Uterus (tissue), 4 donors: ENCODE measurements at regions of chr1 and their contacts with region 1.

Region 1: GRCh38 chr1:19643602-19644394 is at the start of gene NBL1:
- DNase-seq: peak; percentile 78 to 83
- H3K4me3 ChIP-seq: peak within 1 kb of the TSS; percentile 71 to 89
- H3K27ac ChIP-seq: peak within 1 kb of the TSS; percentile 96 to 97
- H3K4me1 ChIP-seq: peaks cover 0 to 19% of the 10 kb centered on the region in 2 donors
- H3K27me3 ChIP-seq: no peaks in the 10 kb centered on the region
- CTCF ChIP-seq: peak in 3 of 4 experiments; percentile 2 to 38 (median 7)
- POLR2A ChIP-seq: peak; percentile 49 to 75
- total RNA-seq, gene NBL1: 54.1 to 222 (median 71.1) TPM

Region 2: GRCh38 chr1:19462781-19463503 is 180.9 kb before region 1 on chr1:
- intact Hi-C with region 1: no loop called
- DNase-seq: no peak
- H3K4me3 ChIP-seq: no peak overlapping the region
- H3K27ac ChIP-seq: peak overlapping the region; percentile 10 to 27
- H3K4me1 ChIP-seq: no peaks in the 10 kb centered on the region
- H3K27me3 ChIP-seq: no peaks in the 10 kb centered on the region
- CTCF ChIP-seq: no peak
- POLR2A ChIP-seq: no peak

Region 3: DNA sequence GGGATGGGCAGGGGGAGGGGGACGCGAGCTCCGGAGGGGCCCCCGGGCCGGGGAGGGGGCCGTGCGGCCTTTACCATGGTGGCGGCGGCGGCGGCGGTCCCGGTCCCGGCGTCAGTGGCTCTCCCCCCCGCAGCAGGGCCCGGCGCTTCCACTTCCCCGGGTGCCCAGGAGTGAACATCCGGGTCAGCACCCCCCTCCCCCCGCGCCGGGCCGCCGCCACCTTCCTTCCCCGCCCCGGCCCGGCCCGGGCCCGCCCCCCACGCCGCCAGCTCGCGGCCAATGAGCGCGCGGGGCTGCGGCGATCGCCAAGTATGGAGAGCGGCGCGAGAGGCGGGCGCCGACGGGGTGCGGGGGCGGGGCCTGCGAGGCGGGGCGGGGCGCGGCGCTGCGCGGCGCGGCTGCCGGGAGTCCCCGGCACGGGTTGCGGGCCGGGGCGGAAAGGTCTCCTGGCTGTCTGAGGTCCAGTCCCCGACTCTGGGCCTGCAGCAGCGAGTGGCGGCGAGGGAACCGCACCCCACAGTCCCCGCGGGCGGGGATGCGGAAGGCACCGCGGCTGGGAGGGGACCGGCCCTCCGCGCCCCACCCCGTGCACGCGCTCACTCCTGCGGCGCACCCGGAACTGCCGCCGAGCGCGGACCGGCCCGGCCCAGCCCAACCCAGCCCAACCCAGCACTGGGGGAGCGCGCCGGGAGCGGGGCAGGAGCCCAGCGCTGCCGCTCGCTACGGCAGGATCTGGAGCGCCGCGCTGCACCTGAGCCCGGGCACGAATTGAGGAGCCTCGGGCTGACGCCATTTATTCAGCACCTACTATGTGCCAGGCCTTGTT is 158.2 kb before region 1 on chr1 and contains the start of gene CAPZB:
- intact Hi-C with region 1: loop called (anchors 10 kb)
- DNase-seq: peak; percentile 94 to 96
- H3K4me3 ChIP-seq: peak within 1 kb of the TSS; percentile 78 to 99
- H3K27ac ChIP-seq: peak within 1 kb of the TSS; percentile 96 to 100
- H3K4me1 ChIP-seq: peaks cover 13 to 38% of the 10 kb centered on the region in 2 donors
- H3K27me3 ChIP-seq: no peaks in the 10 kb centered on the region
- CTCF ChIP-seq: peak in 2 of 4 experiments; percentile 8 to 36
- POLR2A ChIP-seq: peak; percentile 82 to 95
- total RNA-seq, gene CAPZB: 94.4 to 281 (median 141) TPM

Region 4: DNA sequence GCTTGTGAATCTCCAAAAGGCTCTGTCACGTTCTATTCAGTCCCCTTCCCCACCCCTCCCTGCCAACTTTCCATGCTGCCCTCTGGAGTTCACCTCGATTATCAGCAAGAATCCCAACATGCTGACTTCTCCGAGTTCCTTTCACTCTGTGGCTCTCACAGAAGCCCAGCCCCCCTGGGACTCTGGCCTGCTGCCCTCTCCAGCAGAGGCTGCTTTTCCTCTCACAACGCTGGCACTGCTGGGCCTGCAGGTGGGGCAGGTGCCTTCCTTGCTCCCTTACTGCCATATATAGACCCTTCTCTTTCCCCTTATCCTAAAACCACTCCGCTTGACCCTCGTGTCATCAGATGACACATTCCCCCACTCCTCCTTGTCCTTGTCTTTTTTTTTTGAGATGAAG is 181.5 kb after region 1 on chr1:
- intact Hi-C with region 1: no loop called
- DNase-seq: no peak
- H3K4me3 ChIP-seq: no peak overlapping the region
- H3K27ac ChIP-seq: no peak overlapping the region
- H3K4me1 ChIP-seq: no peaks in the 10 kb centered on the region
- H3K27me3 ChIP-seq: no peaks in the 10 kb centered on the region
- CTCF ChIP-seq: no peak
- POLR2A ChIP-seq: no peak